Activated B cell treated with CpG ODN at 0.5 μM for 24 hours (primary cell): ENCODE measurements at regions of chr9 and their contacts with region 1.

Region 1: DNA sequence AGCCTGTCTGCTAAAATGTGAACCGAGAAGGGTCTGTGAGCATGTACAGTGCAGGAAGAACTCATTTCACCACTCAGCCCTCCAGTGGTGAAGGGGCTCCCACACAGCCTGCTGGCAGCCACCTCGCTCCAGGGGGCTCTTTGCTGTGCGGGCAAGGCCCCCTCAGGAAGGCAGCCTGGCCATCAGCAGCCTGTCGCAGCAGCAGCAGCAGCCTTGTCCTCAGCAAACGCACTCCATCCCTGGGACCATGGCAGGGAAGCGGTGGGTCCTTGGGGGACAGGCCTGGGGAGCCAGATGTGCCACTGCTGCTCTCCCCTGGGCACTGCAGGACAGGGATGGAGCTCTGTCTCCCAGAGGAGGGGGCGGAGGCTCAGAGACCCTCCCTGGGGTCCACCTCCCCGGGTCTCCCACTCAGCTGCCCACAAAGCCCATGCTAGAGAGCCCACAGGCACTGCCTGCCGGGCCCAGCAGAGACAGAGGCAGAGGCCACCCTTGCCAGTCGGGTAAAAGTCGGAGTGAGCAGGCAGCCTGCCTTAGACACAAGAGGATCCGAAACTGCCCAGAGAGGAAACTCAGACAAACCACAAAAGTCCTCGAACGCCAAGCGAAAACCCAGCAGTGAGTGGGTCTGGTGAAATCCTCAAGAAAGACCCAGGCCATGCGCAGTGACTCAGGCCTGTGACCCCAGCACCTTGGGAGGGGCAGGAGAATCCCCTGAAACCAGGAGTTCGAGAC is 8.0 kb downstream of the BRD3 start:
- DNase-seq: peak; percentile 52
- ATAC-seq: peak; percentile 96
- H3K4me3 Mint-ChIP-seq: peak overlapping the region; percentile 50
- H3K27ac Mint-ChIP-seq: no peak overlapping the region
- H3K4me1 Mint-ChIP-seq: peaks cover 61% of the 10 kb centered on the region
- H3K27me3 Mint-ChIP-seq: no peaks in the 10 kb centered on the region
- CTCF ChIP-seq: no peak

Region 2: DNA sequence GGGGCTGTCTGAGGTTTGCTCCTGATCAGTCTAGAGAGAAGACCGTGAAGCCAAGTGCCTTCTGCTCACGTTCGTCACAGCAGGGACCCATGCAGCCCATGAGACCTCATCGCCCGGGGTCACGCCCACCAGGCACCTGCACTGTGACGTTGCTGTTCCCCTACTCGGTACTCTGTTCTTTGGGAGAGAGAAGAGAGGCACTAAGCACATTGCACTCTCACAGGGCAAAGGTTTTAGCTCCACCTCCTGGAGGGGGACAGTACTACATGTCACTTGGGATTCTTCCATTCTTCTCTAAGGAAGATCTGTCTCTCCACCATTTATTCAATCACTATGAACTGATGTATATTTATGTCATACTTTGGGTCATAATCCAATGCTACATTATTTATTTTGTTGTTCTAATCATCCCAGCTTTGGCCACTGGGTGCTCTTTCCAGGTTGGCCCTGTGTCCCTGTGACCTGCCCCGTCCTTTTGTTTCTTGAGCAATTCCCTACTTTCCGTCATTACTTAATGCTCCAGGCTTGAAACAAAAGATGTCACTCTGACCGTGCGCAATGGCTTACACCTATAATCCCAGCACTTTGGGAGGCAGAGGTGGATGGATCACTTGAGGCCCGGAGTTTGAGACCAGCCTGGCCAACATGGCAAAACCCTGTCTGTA is 39.4 kb after region 1 on chr9:
- CTCF ChIA-PET with region 1: no interaction called
- POLR2A ChIA-PET with region 1: no interaction called
- intact Hi-C with region 1: loop called (anchors 5 kb)
- DNase-seq: peak; percentile 24
- ATAC-seq: peak; percentile 85
- H3K4me3 Mint-ChIP-seq: no peak overlapping the region
- H3K27ac Mint-ChIP-seq: no peak overlapping the region
- H3K4me1 Mint-ChIP-seq: peaks cover 4% of the 10 kb centered on the region
- H3K27me3 Mint-ChIP-seq: peaks cover 7% of the 10 kb centered on the region
- CTCF ChIP-seq: no peak

Region 3: GRCh38 chr9:134146774-134147500 is 87.1 kb after region 1 on chr9:
- CTCF ChIA-PET with region 1: no interaction called
- POLR2A ChIA-PET with region 1: no interaction called
- intact Hi-C with region 1: no loop called
- DNase-seq: no peak
- ATAC-seq: no peak
- H3K4me3 Mint-ChIP-seq: no peak overlapping the region
- H3K27ac Mint-ChIP-seq: no peak overlapping the region
- H3K4me1 Mint-ChIP-seq: no peaks in the 10 kb centered on the region
- H3K27me3 Mint-ChIP-seq: no peaks in the 10 kb centered on the region
- CTCF ChIP-seq: no peak

Region 4: GRCh38 chr9:134175808-134176598 is 116.2 kb after region 1 on chr9:
- CTCF ChIA-PET with region 1: no interaction called
- POLR2A ChIA-PET with region 1: no interaction called
- intact Hi-C with region 1: no loop called
- DNase-seq: no peak
- ATAC-seq: no peak
- H3K4me3 Mint-ChIP-seq: no peak overlapping the region
- H3K27ac Mint-ChIP-seq: no peak overlapping the region
- H3K4me1 Mint-ChIP-seq: peaks cover 17% of the 10 kb centered on the region
- H3K27me3 Mint-ChIP-seq: peaks cover 29% of the 10 kb centered on the region
- CTCF ChIP-seq: no peak